PC-9 (cell line): ENCODE measurements at regions of chr19 and their contacts with region 1.

Region 1: DNA sequence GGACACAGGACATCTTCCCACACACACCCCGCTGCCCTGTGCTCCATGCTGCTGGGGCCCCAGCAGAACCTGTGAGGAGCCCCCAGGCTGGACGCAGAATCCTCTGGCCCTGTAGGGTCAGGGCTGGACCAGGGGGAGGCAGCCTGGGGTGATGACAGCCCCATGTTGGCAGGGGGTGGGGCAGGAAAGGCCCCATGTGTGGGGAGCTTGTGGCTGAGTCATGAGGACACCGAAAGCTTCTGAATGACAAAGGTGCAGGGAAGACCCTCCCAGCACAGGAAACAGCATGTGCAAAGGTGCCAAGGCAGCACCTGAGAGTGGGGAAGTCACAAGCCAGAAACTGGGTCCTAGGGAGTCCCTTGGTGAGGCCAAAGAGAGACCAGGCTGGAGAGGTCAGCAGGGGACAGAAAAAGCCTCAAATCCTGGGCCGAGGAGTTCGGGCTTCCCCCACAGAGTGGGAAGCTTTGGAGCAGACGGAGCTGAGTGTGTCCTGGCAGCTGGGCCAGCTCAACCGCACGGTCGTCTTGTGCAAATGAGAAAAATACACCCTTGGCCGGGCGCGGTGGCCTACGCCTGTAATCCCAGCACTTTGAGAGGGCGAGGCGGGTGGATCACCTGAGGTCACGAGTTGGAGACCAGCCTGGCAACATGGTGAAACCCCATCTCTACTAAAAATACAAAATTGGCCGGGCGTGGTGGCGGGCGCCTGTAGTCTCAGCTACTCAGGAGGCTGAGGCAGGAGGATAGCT is 17.5 kb downstream of the ATP8B3 start:
- DNase-seq: no peak
- H3K4me3 ChIP-seq: no peak overlapping the region
- H3K27ac ChIP-seq: no peak overlapping the region
- H3K4me1 ChIP-seq: no peaks in the 10 kb centered on the region
- H3K27me3 ChIP-seq: no peaks in the 10 kb centered on the region; the same call in 1 of the 2 replicates
- CTCF ChIP-seq: no peak

Region 2: GRCh38 chr19:1605236-1606137 is 189.1 kb before region 1 on chr19 and contains the start of gene UQCR11:
- CTCF ChIA-PET with region 1: no interaction called
- POLR2A ChIA-PET with region 1: no interaction called
- intact Hi-C with region 1: loop called (anchors 5 kb)
- DNase-seq: peak; percentile 86 to 92
- H3K4me3 ChIP-seq: peak within 1 kb of the TSS; percentile 92
- H3K27ac ChIP-seq: peak within 1 kb of the TSS; percentile 73
- H3K4me1 ChIP-seq: peaks cover 26% of the 10 kb centered on the region
- H3K27me3 ChIP-seq: no peaks in the 10 kb centered on the region
- CTCF ChIP-seq: peak; percentile 57; the same call in 1 of the 2 replicates
- total RNA-seq, gene UQCR11: 196 and 275 TPM in 2 replicates

Region 3: GRCh38 chr19:1812469-1813196 is 18.0 kb after region 1 on chr19:
- CTCF ChIA-PET with region 1: interaction called, 12 read pairs
- POLR2A ChIA-PET with region 1: no interaction called
- intact Hi-C with region 1: no loop called
- DNase-seq: peak; percentile 79 to 94
- H3K4me3 ChIP-seq: peak overlapping the region; percentile 60
- H3K27ac ChIP-seq: no peak overlapping the region
- H3K4me1 ChIP-seq: peaks cover 4% of the 10 kb centered on the region; the same call in 1 of the 2 replicates
- H3K27me3 ChIP-seq: no peaks in the 10 kb centered on the region
- CTCF ChIP-seq: peak; percentile 68